ENCODE measurements at regions of chr22 and their contacts with region 1.

Region 1: GRCh38 chr22:36362932-36363331 is 24.8 kb downstream of the MYH9 start:
- DNase-seq: no peak
- H3K4me3 ChIP-seq: no peak overlapping the region
- H3K4me3 Mint-ChIP-seq: peak overlapping the region; percentile 61
- H3K27ac Mint-ChIP-seq: peak overlapping the region; percentile 94
- H3K4me1 ChIP-seq: peaks cover 95% of the 10 kb centered on the region
- H3K4me1 Mint-ChIP-seq: peaks cover 66% of the 10 kb centered on the region
- H3K27me3 ChIP-seq: no peaks in the 10 kb centered on the region
- H3K27me3 Mint-ChIP-seq: no peaks in the 10 kb centered on the region
- CTCF ChIP-seq: no peak

Region 2: DNA sequence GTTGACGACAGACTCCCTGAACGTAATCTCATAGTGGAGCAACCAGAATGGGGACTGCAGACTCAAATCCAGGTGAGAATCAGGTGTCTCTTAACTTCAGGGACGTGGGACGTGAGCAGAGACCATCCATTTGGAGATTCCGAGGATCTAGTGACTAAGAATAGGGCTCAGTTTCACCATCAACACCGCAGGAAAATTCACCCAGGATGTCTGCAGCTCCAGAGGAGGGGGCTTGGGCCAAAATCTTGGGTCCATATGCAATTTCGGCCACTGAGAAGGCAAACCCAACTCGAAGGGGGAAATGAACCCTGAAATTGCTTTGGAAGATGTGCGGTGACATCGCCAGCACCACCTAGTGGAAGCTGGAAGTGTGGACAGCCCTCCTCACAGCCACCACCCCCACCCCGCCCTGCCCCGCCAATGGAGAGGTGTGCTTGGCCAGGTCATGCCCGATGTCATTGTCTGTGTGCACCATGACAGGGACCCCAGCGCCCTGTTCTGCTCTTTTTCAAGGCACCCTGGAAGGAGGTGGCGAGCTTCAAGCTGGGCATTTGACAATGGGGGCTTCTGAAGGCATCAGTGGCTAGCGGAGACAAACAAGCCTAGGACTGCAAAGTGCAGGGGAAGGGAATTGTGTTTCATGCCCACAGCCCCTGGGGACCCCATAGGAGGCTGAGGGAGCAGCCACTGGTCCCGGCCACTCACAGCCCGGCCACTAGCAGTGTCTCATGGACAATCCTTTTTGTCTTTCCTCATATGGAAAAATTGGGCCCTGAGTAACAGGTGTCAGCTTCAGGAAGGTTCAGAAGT is 85.2 kb before region 1 on chr22:
- CTCF ChIA-PET with region 1: no interaction called
- POLR2A ChIA-PET with region 1: no interaction called
- intact Hi-C with region 1: no loop called
- DNase-seq: peak; percentile 60 to 64
- H3K4me3 ChIP-seq: no peak overlapping the region
- H3K4me3 Mint-ChIP-seq: peak overlapping the region; percentile 29
- H3K27ac Mint-ChIP-seq: peak overlapping the region; percentile 51
- H3K4me1 ChIP-seq: no peaks in the 10 kb centered on the region
- H3K4me1 Mint-ChIP-seq: peaks cover 6% of the 10 kb centered on the region
- H3K27me3 ChIP-seq: no peaks in the 10 kb centered on the region
- H3K27me3 Mint-ChIP-seq: no peaks in the 10 kb centered on the region
- CTCF ChIP-seq: peak; percentile 73 to 76

Region 3: GRCh38 chr22:36329254-36330078 is 33.5 kb before region 1 on chr22:
- CTCF ChIA-PET with region 1: interaction called, 3 read pairs
- POLR2A ChIA-PET with region 1: no interaction called
- intact Hi-C with region 1: loop called (anchors 1 kb)
- DNase-seq: peak; percentile 89 to 94
- H3K4me3 ChIP-seq: no peak overlapping the region
- H3K4me3 Mint-ChIP-seq: peak overlapping the region; percentile 51
- H3K27ac Mint-ChIP-seq: peak overlapping the region; percentile 95
- H3K4me1 ChIP-seq: peaks cover 62% of the 10 kb centered on the region
- H3K4me1 Mint-ChIP-seq: peaks cover 64% of the 10 kb centered on the region
- H3K27me3 ChIP-seq: no peaks in the 10 kb centered on the region
- H3K27me3 Mint-ChIP-seq: no peaks in the 10 kb centered on the region
- CTCF ChIP-seq: no peak

Region 4: DNA sequence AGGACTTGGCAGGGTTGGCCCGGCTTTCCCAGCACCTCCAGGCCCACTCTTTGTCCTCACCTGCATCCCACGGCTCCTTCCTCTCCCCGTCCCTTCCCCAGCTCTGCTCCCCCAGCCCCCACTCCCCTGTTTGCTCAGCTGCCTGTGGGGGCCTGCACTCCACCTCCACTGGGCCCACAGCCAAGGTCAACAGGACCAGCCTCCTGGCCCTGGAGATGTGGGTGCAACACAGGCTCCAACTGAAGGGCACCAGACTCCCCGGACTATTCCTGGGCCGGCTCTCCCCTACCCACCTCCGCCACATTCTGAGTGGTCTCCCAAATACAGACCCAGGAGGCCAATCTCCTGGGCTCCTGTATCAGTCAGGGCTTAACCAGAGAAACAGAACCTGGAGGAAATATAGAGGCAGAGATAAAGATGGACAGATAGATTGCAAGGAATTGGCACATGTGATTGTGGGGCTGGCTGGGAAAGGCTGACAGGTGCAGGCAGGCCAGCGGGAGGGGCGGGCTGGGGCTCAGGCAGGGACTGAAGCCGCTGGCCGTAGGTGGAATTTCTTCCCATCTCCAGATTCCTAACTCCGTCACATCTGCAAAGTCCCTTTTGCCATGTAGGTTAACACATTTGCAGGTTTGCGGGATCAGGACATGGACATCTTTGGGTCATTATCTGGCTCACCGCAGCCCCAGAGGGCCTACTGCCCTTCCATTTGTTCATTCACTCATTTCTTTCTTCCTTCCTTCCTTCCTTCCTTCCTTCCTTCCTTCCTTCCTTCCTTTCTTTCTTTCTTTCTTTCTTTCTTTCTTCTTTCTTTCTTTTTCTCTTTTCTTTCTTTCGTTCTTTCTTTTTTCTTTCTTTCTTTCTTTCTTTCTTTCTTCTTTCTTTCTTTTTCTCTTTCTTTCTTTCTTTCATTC is 70.6 kb after region 1 on chr22:
- CTCF ChIA-PET with region 1: interaction called, 3 read pairs
- POLR2A ChIA-PET with region 1: no interaction called
- intact Hi-C with region 1: loop called (anchors 5 kb)
- DNase-seq: peak in 1 of 2 experiments; percentile 53
- H3K4me3 ChIP-seq: no peak overlapping the region
- H3K4me3 Mint-ChIP-seq: peak overlapping the region; percentile 50
- H3K27ac Mint-ChIP-seq: peak overlapping the region; percentile 73
- H3K4me1 ChIP-seq: peaks cover 55% of the 10 kb centered on the region
- H3K4me1 Mint-ChIP-seq: peaks cover 38% of the 10 kb centered on the region
- H3K27me3 ChIP-seq: no peaks in the 10 kb centered on the region
- H3K27me3 Mint-ChIP-seq: no peaks in the 10 kb centered on the region
- CTCF ChIP-seq: no peak

Measured in Caco-2 (cell line).